ENCODE measurements at regions of chr1 and their contacts with region 1.

Region 1: DNA sequence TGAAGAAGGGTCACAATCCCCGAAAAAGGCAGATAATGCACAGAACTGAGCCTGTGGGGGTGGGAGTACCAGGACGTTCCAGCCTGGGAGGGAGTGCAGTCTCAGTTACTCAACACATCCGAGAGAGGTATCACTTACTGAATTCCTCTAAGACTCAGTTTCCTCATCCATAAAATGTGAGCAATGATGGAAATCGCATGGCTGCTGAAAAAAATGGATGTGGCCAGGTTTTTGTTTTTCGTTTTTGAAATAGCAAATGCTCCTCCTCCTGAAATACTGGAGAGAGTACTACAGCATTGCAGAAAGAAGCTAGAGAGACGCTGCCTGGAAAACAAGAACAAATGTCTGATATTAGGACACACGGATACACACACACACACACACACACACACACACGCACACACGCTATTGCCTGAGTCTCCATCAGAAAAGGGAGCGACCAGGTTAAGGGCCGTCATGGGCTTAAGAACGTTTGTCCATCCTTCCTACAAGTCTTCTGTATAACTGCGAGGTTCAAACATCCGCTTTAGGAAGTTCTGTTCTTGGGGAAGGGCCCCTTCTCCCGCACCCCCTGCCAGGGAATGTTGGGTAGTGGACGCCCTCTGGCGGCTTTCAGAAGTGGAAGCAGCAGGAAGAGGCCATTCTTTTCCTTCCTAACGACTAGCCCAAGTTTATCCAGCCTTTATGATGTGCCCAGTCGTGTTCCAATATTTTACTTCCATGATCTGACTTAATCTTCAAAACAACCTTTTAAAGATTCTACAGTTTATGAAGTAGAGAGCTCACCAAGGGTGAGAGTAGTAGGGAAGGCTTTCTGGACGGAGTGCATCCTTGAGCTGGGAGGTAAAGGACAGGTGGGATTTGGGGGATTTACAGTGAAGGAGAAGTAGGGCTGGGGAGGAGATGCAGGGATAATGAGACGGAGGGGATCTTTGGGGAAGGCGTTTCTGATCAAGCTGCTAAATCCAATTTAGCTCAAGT is 699 bp upstream of the NES start:
- DNase-seq: peak in 1 of 2 experiments; percentile 56
- H3K4me3 ChIP-seq: peak overlapping the region; percentile 39; the same call in 1 of the 2 replicates
- H3K27ac ChIP-seq: no peak overlapping the region
- H3K4me1 ChIP-seq: peaks cover 9% of the 10 kb centered on the region
- H3K27me3 ChIP-seq: peaks cover 24% of the 10 kb centered on the region
- CTCF ChIP-seq: peak; percentile 91

Region 2: DNA sequence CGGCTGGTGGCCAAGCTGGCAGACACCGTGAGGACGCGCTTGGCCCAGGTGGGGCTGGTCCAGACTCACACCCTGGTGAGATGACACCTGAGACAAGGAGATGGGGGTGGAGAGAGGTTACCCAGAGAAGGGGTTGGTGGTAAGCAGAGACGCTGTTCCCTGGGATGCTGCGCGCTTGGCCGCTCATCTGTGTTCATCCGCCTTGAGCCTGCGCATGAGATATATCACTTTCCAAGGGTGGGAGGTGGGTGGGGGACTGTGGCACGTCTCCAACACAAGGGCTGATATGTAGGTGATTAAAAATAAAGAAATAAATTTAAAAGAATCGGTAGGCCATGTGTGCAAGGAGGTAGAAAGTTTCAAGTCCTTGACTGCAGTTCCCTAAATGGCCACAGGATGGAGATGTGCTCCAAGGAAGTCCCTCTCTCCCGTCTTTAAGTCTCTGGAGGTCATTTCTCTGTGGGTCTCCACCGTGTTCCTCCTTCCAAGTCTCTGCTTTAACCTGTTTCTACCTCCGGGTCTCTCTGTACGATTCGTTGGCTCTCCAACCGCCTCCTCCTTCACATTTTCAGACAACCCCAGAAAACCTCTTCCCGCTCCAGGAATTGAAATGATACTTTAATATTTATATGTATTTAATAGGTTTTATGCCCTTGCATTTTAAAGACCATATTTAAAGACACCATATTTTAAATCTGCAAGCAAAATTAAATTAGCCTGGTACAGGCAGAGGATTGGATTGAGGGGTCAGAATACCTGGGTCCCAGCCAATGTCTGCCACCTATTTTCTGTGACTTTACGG is 93.9 kb before region 1 on chr1:
- CTCF ChIA-PET with region 1: no interaction called
- POLR2A ChIA-PET with region 1: no interaction called
- intact Hi-C with region 1: loop called (anchors 2 kb)
- DNase-seq: peak; percentile 61 to 62
- H3K4me3 ChIP-seq: no peak overlapping the region
- H3K27ac ChIP-seq: no peak overlapping the region
- H3K4me1 ChIP-seq: no peaks in the 10 kb centered on the region
- H3K27me3 ChIP-seq: no peaks in the 10 kb centered on the region
- CTCF ChIP-seq: peak; percentile 91

Region 3: GRCh38 chr1:156625436-156626078 is 52.3 kb before region 1 on chr1:
- CTCF ChIA-PET with region 1: interaction called, 11 read pairs
- POLR2A ChIA-PET with region 1: no interaction called
- intact Hi-C with region 1: loop called (anchors 1 kb)
- DNase-seq: peak in 1 of 2 experiments; percentile 32
- H3K4me3 ChIP-seq: no peak overlapping the region
- H3K27ac ChIP-seq: no peak overlapping the region
- H3K4me1 ChIP-seq: peaks cover 26% of the 10 kb centered on the region
- H3K27me3 ChIP-seq: peaks cover 13% of the 10 kb centered on the region; the same call in 1 of the 2 replicates
- CTCF ChIP-seq: peak; percentile 92

Region 4: DNA sequence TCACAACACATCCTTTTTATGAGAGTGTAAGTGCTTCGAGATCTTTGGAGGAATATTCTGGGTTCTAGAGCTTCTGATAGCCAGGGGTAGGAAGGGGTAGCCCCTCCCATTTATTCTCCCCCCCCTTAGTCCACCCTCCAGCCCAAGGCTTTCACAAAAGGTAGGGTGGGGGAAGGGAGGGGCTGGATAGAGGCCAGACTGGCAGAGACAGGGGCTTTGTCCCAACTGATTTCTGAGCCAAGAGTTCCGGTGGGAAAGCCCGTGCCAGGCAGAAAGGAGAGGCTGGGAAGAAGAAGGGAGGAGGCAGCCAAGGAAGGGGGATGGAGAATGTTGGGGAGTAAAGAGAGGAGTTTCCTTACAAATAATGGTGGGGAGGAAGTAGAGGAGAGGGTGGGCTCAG is 32.9 kb before region 1 on chr1:
- CTCF ChIA-PET with region 1: no interaction called
- POLR2A ChIA-PET with region 1: no interaction called
- intact Hi-C with region 1: no loop called
- DNase-seq: no peak
- H3K4me3 ChIP-seq: no peak overlapping the region
- H3K27ac ChIP-seq: no peak overlapping the region
- H3K4me1 ChIP-seq: peaks cover 10% of the 10 kb centered on the region
- H3K27me3 ChIP-seq: no peaks in the 10 kb centered on the region
- CTCF ChIP-seq: no peak

Region 5: GRCh38 chr1:156712626-156713025 is 34.7 kb after region 1 on chr1:
- CTCF ChIA-PET with region 1: no interaction called
- POLR2A ChIA-PET with region 1: no interaction called
- intact Hi-C with region 1: no loop called
- DNase-seq: peak; percentile 71 to 85
- H3K4me3 ChIP-seq: no peak overlapping the region
- H3K27ac ChIP-seq: peak overlapping the region; percentile 75
- H3K4me1 ChIP-seq: peaks cover 51% of the 10 kb centered on the region
- H3K27me3 ChIP-seq: no peaks in the 10 kb centered on the region
- CTCF ChIP-seq: no peak